ENCODE measurements at regions of chr9 and their contacts with region 1.

Region 1: GRCh38 chr9:75185585-75186170 is 97.4 kb downstream of the OSTF1 start:
- DNase-seq: peak in 7 of 9 donors; percentile 10 to 38 (median 25)
- ATAC-seq: peak; percentile 74
- H3K4me3 ChIP-seq: no peak overlapping the region
- H3K4me3 Mint-ChIP-seq: peak overlapping the region in 3 of 10 donors; percentile 20 to 36 (median 25)
- H3K27ac ChIP-seq: no peak overlapping the region
- H3K27ac Mint-ChIP-seq: peak overlapping the region in 2 of 9 donors; percentile 30 to 81
- H3K4me1 ChIP-seq: peaks cover 12 to 13% of the 10 kb centered on the region in 2 donors
- H3K4me1 Mint-ChIP-seq: peaks cover 8 to 32% (median 28%) of the 10 kb centered on the region in 7 donors
- H3K27me3 ChIP-seq: no peaks in the 10 kb centered on the region
- H3K27me3 Mint-ChIP-seq: no peaks in the 10 kb centered on the region

Region 2: DNA sequence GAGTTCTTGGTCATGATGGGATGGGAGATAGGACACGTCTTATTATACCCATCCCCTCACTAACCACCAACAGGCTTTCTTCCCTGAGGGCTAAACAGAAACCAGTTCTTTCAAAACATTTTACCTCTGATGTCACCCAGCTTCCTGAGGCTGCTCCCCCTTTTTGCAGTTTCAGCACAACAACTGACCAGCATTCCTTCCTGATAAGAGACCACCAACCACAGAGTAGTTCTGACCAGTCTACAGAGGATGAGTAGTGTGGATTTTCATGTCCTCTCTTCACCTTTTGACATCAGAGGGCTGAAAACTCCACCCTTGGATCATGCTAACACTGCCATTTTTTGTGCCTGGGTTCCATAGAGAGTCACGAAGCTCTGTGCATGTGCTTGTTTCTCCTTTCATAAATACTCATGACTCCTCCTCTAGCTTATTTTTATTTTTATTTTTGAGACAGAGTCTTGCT is 14.7 kb before region 1 on chr9:
- CTCF ChIA-PET with region 1: interaction called, 5 read pairs
- POLR2A ChIA-PET with region 1: interaction called, 5 read pairs
- intact Hi-C with region 1: loop called in 1 of 2 experiments (anchors 2 kb)
- DNase-seq: no peak
- ATAC-seq: peak; percentile 20
- H3K4me3 ChIP-seq: no peak overlapping the region
- H3K4me3 Mint-ChIP-seq: no peak overlapping the region
- H3K27ac ChIP-seq: no peak overlapping the region
- H3K27ac Mint-ChIP-seq: peak overlapping the region in 2 of 9 donors; percentile 8 to 64
- H3K4me1 ChIP-seq: no peaks in the 10 kb centered on the region
- H3K4me1 Mint-ChIP-seq: peaks cover 7 to 58% (median 30%) of the 10 kb centered on the region in 7 donors
- H3K27me3 ChIP-seq: no peaks in the 10 kb centered on the region
- H3K27me3 Mint-ChIP-seq: no peaks in the 10 kb centered on the region

Region 3: DNA sequence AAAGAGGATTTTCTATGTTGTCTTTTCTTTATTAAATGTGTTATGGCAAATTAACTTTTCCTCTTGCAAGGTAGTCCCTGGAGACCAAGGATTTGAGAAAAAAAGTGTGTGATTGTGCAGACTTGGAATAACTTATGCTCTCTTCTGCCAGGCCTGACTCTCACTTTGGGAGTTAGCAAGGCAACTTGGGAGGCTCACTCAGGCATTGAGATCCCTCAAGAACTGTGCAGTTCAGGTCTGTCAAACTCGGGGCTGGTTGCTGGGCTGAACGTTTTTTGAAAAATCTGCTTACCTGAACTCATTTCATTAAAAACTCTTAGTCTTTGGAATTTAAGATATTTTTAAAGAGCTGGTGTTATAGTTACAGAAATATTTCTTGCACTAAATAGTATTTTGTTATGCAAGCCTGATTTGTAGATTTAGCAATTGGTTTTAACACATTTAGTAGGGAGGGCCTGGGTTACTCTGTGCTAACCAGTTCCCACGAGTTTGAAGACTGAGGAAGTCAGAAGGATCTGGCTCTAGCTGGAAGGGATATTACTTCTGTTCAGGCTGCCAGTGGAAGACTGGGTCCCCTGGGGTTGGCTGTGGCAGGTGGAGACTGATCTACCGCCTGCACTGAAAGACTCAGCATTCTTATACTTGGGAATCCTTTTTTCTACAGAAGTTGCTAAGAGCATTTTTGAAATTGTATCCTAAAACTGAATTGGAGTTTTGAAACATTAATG is 554.4 kb after region 1 on chr9:
- CTCF ChIA-PET with region 1: no interaction called
- POLR2A ChIA-PET with region 1: no interaction called
- intact Hi-C with region 1: no loop called
- DNase-seq: no peak
- ATAC-seq: no peak
- H3K4me3 ChIP-seq: no peak overlapping the region
- H3K4me3 Mint-ChIP-seq: no peak overlapping the region
- H3K27ac ChIP-seq: no peak overlapping the region
- H3K27ac Mint-ChIP-seq: no peak overlapping the region
- H3K4me1 ChIP-seq: no peaks in the 10 kb centered on the region
- H3K4me1 Mint-ChIP-seq: peaks cover 0 to 1% (median 0%) of the 10 kb centered on the region in 7 donors
- H3K27me3 ChIP-seq: no peaks in the 10 kb centered on the region
- H3K27me3 Mint-ChIP-seq: peaks cover 0 to 41% (median 18%) of the 10 kb centered on the region in 5 donors

Region 4: DNA sequence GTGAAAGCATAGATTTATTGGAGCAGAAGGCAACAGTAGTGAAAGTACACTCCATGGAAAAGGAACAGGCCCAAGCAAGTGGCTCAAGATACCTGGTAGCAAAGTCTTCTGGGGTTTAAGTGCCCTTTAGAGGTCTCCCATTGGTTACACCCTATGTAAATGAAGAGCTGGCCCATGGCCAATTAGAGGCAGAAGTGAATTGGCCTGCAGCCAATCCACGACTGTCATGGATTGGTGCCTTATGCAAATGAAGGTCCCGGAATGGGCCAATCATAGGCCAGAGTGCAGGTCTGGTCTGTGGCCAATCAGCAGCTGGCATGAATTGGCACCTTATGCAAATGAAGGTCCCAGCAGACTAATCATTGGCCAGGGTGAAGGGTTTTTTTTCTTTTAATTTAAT is 640.6 kb after region 1 on chr9:
- CTCF ChIA-PET with region 1: no interaction called
- POLR2A ChIA-PET with region 1: no interaction called
- intact Hi-C with region 1: no loop called
- DNase-seq: no peak
- ATAC-seq: no peak
- H3K4me3 ChIP-seq: no peak overlapping the region
- H3K4me3 Mint-ChIP-seq: no peak overlapping the region
- H3K27ac ChIP-seq: no peak overlapping the region
- H3K27ac Mint-ChIP-seq: peak overlapping the region in 1 of 9 donors; percentile 3
- H3K4me1 ChIP-seq: no peaks in the 10 kb centered on the region
- H3K4me1 Mint-ChIP-seq: no peaks in the 10 kb centered on the region
- H3K27me3 ChIP-seq: no peaks in the 10 kb centered on the region
- H3K27me3 Mint-ChIP-seq: peaks cover 3 to 32% (median 23%) of the 10 kb centered on the region in 5 donors

Measured in naive thymus-derived CD4-positive, alpha-beta T cell (primary cell).